ENCODE measurements at regions of chr10 and their contacts with region 1.

Region 1: DNA sequence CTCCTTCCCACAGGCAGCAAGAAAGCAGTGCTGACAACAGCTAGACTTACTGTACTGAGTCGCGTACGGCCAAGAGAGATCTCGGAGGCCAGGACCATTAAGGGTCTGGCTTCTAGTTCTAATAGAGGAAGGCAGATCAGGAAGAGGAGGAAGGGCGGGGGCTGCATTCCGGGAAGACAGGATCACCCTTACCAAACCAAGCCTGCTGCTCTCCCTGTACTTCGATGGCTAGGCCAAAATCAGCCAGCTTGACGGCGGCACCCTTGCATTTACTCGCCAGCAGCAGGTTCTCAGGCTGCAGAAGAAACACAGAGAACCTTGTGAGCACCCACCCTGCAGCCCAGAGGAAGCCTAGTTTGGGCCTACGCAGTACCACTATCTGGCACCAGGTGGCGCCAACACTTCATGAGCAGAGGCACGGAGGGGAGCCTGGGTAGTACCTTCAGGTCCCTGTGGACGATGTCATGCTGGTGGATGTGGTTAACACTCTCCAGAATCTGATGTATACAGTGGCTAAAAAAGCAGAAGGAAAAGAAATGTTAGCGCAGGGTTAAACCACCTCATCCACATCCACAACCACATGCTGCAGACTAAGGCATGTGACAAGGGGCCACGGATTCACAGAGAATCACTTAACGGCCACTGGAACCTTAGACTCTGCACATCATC is 25.4 kb downstream of the CAMK2G start:
- DNase-seq: peak; percentile 73 to 89 (median 87)
- H3K4me3 ChIP-seq: no peak overlapping the region
- H3K27ac ChIP-seq: no peak overlapping the region
- H3K4me1 ChIP-seq: peaks cover 1% of the 10 kb centered on the region
- H3K27me3 ChIP-seq: no peaks in the 10 kb centered on the region
- CTCF ChIP-seq: peak; percentile 96 to 99 (median 96)
- EP300 ChIP-seq: no peak
- POLR2A ChIP-seq: peak; percentile 14

Region 2: DNA sequence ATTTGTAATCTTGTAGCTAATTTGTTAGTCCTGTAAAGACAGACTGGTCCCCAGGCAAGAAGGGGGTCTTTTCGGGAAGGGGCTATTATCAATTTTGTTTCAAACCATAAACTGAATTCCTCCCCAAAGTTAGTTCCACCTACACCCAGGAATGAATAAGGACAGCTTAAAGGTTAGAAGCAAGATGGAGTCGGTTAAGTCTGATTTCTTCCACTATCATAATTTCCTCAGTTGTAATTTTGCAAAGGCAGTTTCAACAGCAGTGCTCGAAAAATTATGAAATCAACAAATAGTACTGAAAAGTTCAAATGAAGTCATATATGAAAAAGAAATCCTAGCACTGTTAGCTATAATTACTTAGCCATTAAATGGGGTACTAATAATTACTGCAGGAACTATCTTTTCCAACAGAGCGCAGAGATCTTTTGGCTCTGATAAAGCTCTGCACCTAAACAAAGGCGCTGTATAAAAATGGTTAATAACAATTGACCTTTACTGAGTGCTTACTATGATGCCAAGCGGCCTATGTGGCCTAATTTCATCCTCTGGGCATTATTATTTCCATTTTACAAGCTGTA is 105.5 kb before region 1 on chr10:
- intact Hi-C with region 1: no loop called
- DNase-seq: no peak
- H3K4me3 ChIP-seq: peak overlapping the region; percentile 97
- H3K27ac ChIP-seq: peak overlapping the region; percentile 73 to 81
- H3K4me1 ChIP-seq: peaks cover 4% of the 10 kb centered on the region
- H3K27me3 ChIP-seq: no peaks in the 10 kb centered on the region
- CTCF ChIP-seq: no peak
- EP300 ChIP-seq: no peak
- POLR2A ChIP-seq: no peak

Region 3: GRCh38 chr10:73819513-73820093 is 29.4 kb before region 1 on chr10:
- intact Hi-C with region 1: loop called in 1 of 4 experiments (anchors 2 kb)
- DNase-seq: no peak
- H3K4me3 ChIP-seq: no peak overlapping the region
- H3K27ac ChIP-seq: no peak overlapping the region
- H3K4me1 ChIP-seq: no peaks in the 10 kb centered on the region
- H3K27me3 ChIP-seq: no peaks in the 10 kb centered on the region
- CTCF ChIP-seq: no peak
- EP300 ChIP-seq: no peak
- POLR2A ChIP-seq: no peak

Region 4: GRCh38 chr10:73874267-73875138 is 25.5 kb after region 1 on chr10 and contains the start of gene CAMK2G:
- intact Hi-C with region 1: loop called in 2 of 4 experiments (anchors 1 to 2 kb)
- DNase-seq: peak; percentile 81 to 88 (median 82)
- H3K4me3 ChIP-seq: peak within 1 kb of the TSS; percentile 93
- H3K27ac ChIP-seq: no peak within 1 kb of the TSS
- H3K4me1 ChIP-seq: peaks cover 3% of the 10 kb centered on the region
- H3K27me3 ChIP-seq: no peaks in the 10 kb centered on the region
- CTCF ChIP-seq: peak in 1 of 3 donors; percentile 30
- EP300 ChIP-seq: no peak
- POLR2A ChIP-seq: peak; percentile 13
- total RNA-seq, gene CAMK2G: 9.8 to 25.0 (median 16.7) TPM

Region 5: GRCh38 chr10:73879296-73880173 is 30.6 kb after region 1 on chr10:
- intact Hi-C with region 1: loop called in 3 of 4 experiments (anchors 1 to 2 kb)
- DNase-seq: peak; percentile 66 to 87 (median 79)
- H3K4me3 ChIP-seq: no peak overlapping the region
- H3K27ac ChIP-seq: no peak overlapping the region
- H3K4me1 ChIP-seq: peaks cover 3% of the 10 kb centered on the region
- H3K27me3 ChIP-seq: no peaks in the 10 kb centered on the region
- CTCF ChIP-seq: peak; percentile 65 to 96 (median 85)
- EP300 ChIP-seq: no peak
- POLR2A ChIP-seq: no peak